H1 (cell line): ENCODE measurements at regions of chr6 and their contacts with region 1.

Region 1: GRCh38 chr6:70221025-70221714 is 81.7 kb downstream of the COL9A1 start:
- DNase-seq: no peak
- H3K4me3 ChIP-seq: no peak overlapping the region
- H3K27ac ChIP-seq: no peak overlapping the region
- H3K4me1 ChIP-seq: peaks cover 0 to 3% (median 0%) of the 10 kb centered on the region in 4 experiments; a peak in 2 of 7 replicates
- H3K27me3 ChIP-seq: no peaks in the 10 kb centered on the region
- CTCF ChIP-seq: peak in 2 of 3 experiments; percentile 31 to 69; a peak in 3 of 4 replicates
- EP300 ChIP-seq: no peak
- POLR2A ChIP-seq: no peak
- RAD21 ChIP-seq: peak; percentile 87 to 88

Region 2: DNA sequence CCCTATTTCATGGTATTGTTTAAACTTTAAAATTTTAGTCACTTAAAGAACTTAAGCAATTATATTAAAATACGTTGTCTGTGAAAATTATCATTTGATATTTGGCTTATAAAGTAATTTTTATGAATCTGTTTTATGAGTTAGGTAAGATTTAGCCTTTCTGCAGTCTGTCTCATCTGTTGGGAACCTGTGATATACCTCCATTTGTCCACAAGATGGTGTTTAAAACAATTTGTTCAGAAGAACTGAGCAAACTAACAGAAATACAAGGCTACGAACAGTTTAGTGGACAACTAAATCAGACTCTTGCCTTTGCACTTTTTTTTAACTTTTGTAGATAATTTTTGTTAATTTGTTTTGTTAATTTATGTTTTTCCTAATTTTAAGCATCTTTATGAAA is 10.7 kb before region 1 on chr6:
- CTCF ChIA-PET with region 1: interaction called, 29 read pairs
- POLR2A ChIA-PET with region 1: no interaction called
- DNase-seq: no peak
- H3K4me3 ChIP-seq: no peak overlapping the region
- H3K27ac ChIP-seq: no peak overlapping the region
- H3K4me1 ChIP-seq: no peaks in the 10 kb centered on the region
- H3K27me3 ChIP-seq: no peaks in the 10 kb centered on the region
- CTCF ChIP-seq: peak in 1 of 3 experiments; percentile 21; a peak in 2 of 4 replicates
- EP300 ChIP-seq: no peak
- POLR2A ChIP-seq: no peak
- RAD21 ChIP-seq: peak in 1 of 2 experiments; percentile 18; a peak in 3 of 4 replicates

Region 3: DNA sequence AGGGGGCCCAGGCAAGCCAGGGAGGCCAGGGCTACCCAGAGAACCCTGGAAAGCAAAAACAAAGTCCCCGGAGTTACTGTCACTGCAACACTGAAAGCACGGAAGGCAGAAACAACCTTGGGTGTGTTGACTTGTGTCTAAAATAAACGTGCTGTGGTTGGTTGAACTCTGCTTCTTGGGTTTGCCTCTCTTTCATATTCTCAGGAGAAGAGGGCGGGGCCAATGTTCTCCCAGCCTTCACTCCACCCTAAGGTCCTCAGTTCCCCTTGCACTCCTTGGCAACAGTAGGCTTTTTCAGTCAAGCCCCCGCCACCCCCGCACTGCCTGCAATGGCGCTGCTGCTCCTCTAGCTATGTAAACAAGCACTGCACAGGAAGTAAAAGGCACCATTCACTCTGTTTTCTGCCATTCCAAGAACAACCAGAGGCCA is 20.8 kb after region 1 on chr6:
- CTCF ChIA-PET with region 1: interaction called, 20 read pairs
- POLR2A ChIA-PET with region 1: interaction called, 5 read pairs
- DNase-seq: no peak
- H3K4me3 ChIP-seq: no peak overlapping the region
- H3K27ac ChIP-seq: no peak overlapping the region
- H3K4me1 ChIP-seq: peaks cover 0 to 6% (median 4%) of the 10 kb centered on the region in 4 experiments; a peak in 5 of 7 replicates
- H3K27me3 ChIP-seq: no peaks in the 10 kb centered on the region
- CTCF ChIP-seq: no peak
- EP300 ChIP-seq: no peak
- POLR2A ChIP-seq: no peak
- RAD21 ChIP-seq: no peak

Region 4: DNA sequence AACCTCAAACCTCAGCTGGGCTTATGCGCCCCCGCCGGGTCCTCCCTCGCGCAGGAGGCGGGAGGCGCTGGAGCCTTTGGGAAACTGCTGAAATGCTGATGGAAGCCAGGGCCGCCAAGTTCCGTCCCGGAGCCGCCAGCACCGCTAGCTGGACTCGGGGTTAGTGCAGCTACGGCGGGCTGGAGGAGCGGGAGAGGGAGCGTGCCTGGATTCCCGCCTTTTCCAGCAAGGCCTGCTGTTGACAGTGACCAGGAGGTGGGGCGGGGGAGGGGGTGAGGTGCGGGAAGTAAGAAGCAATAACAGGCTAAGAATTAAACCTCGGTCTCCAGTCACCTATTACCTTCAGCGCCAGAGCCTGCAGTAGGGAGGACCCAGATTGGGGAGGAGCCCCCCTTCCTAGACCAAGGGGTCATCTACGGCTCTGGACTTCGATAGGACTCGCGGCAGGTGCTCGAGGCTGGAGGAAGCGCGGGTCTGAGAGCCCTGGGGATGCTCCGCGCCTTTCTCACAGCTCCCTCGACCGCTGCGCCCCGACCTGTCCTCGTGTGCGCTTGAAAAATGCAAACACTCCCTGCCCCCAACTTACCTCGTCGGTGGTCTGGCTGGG is 61.2 kb after region 1 on chr6:
- CTCF ChIA-PET with region 1: interaction called, 13 read pairs
- POLR2A ChIA-PET with region 1: interaction called, 3 read pairs
- DNase-seq: peak; percentile 23 to 78
- H3K4me3 ChIP-seq: peak overlapping the region; percentile 28 to 68 (median 48)
- H3K27ac ChIP-seq: no peak overlapping the region
- H3K4me1 ChIP-seq: peaks cover 2 to 8% (median 5%) of the 10 kb centered on the region in 4 experiments; a peak in 5 of 7 replicates
- H3K27me3 ChIP-seq: peaks cover 13 to 38% (median 33%) of the 10 kb centered on the region in 4 experiments
- CTCF ChIP-seq: no peak
- EP300 ChIP-seq: no peak
- POLR2A ChIP-seq: peak in 1 of 2 experiments; percentile 31; a peak in 1 of 3 replicates
- RAD21 ChIP-seq: no peak

Region 5: GRCh38 chr6:70304616-70305015 is 83.4 kb after region 1 on chr6:
- CTCF ChIA-PET with region 1: interaction called, 54 read pairs
- POLR2A ChIA-PET with region 1: no interaction called
- DNase-seq: no peak
- H3K4me3 ChIP-seq: no peak overlapping the region
- H3K27ac ChIP-seq: no peak overlapping the region
- H3K4me1 ChIP-seq: peaks cover 0 to 4% (median 2%) of the 10 kb centered on the region in 4 experiments; a peak in 1 of 7 replicates
- H3K27me3 ChIP-seq: no peaks in the 10 kb centered on the region
- CTCF ChIP-seq: no peak
- EP300 ChIP-seq: no peak
- POLR2A ChIP-seq: no peak
- RAD21 ChIP-seq: no peak

Region 6: DNA sequence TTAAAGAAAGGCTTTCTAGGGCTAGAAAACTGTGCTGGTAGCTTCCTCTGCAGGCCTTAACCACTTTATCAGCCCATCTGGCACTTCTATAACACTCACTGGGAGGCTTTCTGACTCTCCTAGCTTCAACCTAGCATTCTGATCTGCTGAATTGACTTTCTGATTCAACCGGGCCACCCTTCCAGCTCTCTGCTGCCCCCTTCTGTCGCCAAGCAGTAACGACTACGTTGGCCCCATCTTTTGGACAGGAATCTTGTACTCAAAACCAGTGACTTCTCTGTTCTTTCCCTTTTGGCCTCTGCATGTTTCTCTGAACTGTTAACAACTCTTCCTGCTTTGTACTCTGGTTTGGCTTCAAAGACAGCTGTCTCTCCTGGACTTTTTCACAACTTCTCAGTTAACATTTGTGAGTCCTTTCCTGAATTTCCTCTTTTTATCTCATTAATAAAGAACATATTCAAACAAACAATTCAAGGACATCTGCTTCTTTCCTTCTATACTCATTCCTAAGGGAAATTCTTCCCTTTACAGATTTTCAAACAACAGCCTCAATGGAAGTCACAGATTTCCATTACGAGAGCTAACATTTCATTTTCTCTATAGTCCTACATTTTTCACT is 148.3 kb after region 1 on chr6:
- CTCF ChIA-PET with region 1: interaction called, 149 read pairs
- POLR2A ChIA-PET with region 1: no interaction called
- DNase-seq: peak; percentile 47 to 84
- H3K4me3 ChIP-seq: no peak overlapping the region
- H3K27ac ChIP-seq: no peak overlapping the region
- H3K4me1 ChIP-seq: no peaks in the 10 kb centered on the region
- H3K27me3 ChIP-seq: no peaks in the 10 kb centered on the region
- CTCF ChIP-seq: peak; percentile 77 to 96 (median 91)
- EP300 ChIP-seq: no peak
- POLR2A ChIP-seq: no peak
- RAD21 ChIP-seq: peak; percentile 88 to 89